AG04450 (cell line): ENCODE measurements at regions of chr3 and their contacts with region 1.

Region 1: DNA sequence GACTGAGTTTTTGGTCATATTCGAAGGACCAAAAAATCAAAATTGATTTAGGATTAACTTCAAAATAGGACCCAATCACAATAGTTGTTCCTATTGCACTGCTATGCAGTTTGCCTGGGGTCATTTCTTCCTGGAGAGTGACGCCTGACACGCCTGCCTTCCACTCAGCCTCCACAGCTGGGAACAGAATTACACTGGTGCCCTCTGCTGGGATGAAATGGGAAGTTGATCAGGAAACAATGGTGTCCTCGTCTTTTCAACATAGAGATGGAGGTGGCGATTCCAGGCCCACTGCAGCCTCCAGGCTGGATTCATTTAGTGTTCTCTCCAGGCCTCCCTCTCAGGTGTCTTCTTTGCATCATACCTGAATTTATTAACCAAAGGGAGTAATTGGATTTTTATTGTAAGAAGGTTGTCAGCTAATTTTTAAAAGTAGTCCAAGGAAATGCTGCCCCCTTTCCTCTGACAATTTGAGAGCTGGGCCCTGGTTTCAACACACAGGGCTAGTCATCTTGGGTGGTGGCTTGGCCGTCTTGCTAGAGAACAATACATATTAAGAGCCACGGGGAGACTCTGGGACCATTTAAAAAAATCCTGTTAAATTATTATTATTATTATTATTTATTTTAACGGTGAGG is 69.7 kb downstream of the GAP43 start:
- DNase-seq: no peak
- H3K4me3 ChIP-seq: no peak overlapping the region
- H3K27ac ChIP-seq: no peak overlapping the region
- H3K27me3 ChIP-seq: no peaks in the 10 kb centered on the region
- CTCF ChIP-seq: peak; percentile 89

Region 2: GRCh38 chr3:115814778-115815380 is 121.9 kb after region 1 on chr3:
- CTCF ChIA-PET with region 1: interaction called, 11 read pairs
- POLR2A ChIA-PET with region 1: no interaction called
- DNase-seq: no peak
- H3K4me3 ChIP-seq: no peak overlapping the region
- H3K27ac ChIP-seq: no peak overlapping the region
- H3K27me3 ChIP-seq: no peaks in the 10 kb centered on the region
- CTCF ChIP-seq: peak; percentile 91